ENCODE measurements at regions of chr1 and their contacts with region 1.

Region 1: GRCh38 chr1:94801919-94802546 is 18.1 kb upstream of the SLC44A3 start:
- DNase-seq: peak in 1 of 2 donors; percentile 68
- H3K4me3 ChIP-seq: peak overlapping the region; percentile 26 to 58
- H3K27ac ChIP-seq: peak overlapping the region; percentile 46 to 71
- H3K4me1 ChIP-seq: peaks cover 0 to 12% of the 10 kb centered on the region in 2 donors
- H3K27me3 ChIP-seq: no peaks in the 10 kb centered on the region
- CTCF ChIP-seq: peak; percentile 53 to 71 (median 56)

Region 2: GRCh38 chr1:94481473-94481933 is 320.5 kb before region 1 on chr1:
- intact Hi-C with region 1: loop called (anchors 2 kb)
- DNase-seq: peak in 1 of 2 donors; percentile 63
- H3K4me3 ChIP-seq: no peak overlapping the region
- H3K27ac ChIP-seq: no peak overlapping the region
- H3K4me1 ChIP-seq: no peaks in the 10 kb centered on the region
- H3K27me3 ChIP-seq: no peaks in the 10 kb centered on the region
- CTCF ChIP-seq: peak; percentile 63 to 80 (median 77)

Region 3: DNA sequence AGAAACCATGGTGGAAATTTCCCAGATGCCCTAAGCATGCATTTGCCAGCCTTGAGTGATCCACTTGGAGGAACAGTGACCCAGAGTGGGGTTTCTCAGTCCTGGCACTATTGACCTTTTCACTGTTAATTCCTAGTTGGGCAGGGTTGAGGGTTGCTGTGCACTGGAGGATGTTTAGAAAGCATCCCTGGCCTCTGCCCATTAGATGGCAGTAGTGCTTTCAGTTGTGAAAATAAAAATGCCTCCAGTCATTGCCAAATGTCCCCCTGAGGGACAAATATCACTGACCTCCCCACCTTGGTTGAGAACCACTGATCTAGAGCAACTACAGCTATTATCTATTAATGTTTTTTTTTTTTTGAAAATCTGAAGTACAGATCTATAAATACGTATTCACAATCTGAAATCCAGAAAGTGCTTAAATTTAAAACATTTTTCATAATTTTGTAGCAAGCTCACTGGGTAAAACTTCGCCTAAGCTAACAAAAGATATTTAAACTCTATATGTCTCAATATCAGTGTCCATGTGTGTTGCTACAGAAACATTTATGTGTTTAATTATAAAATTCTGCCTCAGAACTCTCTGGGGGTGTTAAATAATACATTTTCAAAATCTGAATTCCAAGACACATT is 287.8 kb before region 1 on chr1:
- intact Hi-C with region 1: loop called (anchors 2 kb)
- DNase-seq: no peak
- H3K4me3 ChIP-seq: no peak overlapping the region
- H3K27ac ChIP-seq: no peak overlapping the region
- H3K4me1 ChIP-seq: no peaks in the 10 kb centered on the region
- H3K27me3 ChIP-seq: no peaks in the 10 kb centered on the region
- CTCF ChIP-seq: peak in 2 of 3 experiments; percentile 43 to 55

Region 4: GRCh38 chr1:94522304-94522703 is 279.7 kb before region 1 on chr1:
- intact Hi-C with region 1: loop called (anchors 1 kb)
- DNase-seq: no peak
- H3K4me3 ChIP-seq: no peak overlapping the region
- H3K27ac ChIP-seq: no peak overlapping the region
- H3K4me1 ChIP-seq: no peaks in the 10 kb centered on the region
- H3K27me3 ChIP-seq: no peaks in the 10 kb centered on the region
- CTCF ChIP-seq: peak; percentile 30 to 79 (median 39)

Region 5: GRCh38 chr1:94590203-94591137 is 211.6 kb before region 1 on chr1:
- intact Hi-C with region 1: loop called (anchors 5 kb)
- DNase-seq: no peak
- H3K4me3 ChIP-seq: no peak overlapping the region
- H3K27ac ChIP-seq: peak overlapping the region; percentile 27 to 78
- H3K4me1 ChIP-seq: peaks cover 5 to 12% of the 10 kb centered on the region in 2 donors
- H3K27me3 ChIP-seq: no peaks in the 10 kb centered on the region
- CTCF ChIP-seq: no peak

Region 6: GRCh38 chr1:94727846-94728715 is 74.0 kb before region 1 on chr1:
- intact Hi-C with region 1: loop called (anchors 5 kb)
- DNase-seq: peak in 1 of 2 donors; percentile 78
- H3K4me3 ChIP-seq: no peak overlapping the region
- H3K27ac ChIP-seq: no peak overlapping the region
- H3K4me1 ChIP-seq: peaks cover 0 to 8% of the 10 kb centered on the region in 2 donors
- H3K27me3 ChIP-seq: no peaks in the 10 kb centered on the region
- CTCF ChIP-seq: no peak

Region 7: GRCh38 chr1:94755675-94756074 is 46.4 kb before region 1 on chr1:
- intact Hi-C with region 1: no loop called
- DNase-seq: no peak
- H3K4me3 ChIP-seq: no peak overlapping the region
- H3K27ac ChIP-seq: no peak overlapping the region
- H3K4me1 ChIP-seq: peaks cover 0 to 12% of the 10 kb centered on the region in 2 donors
- H3K27me3 ChIP-seq: no peaks in the 10 kb centered on the region
- CTCF ChIP-seq: no peak